BJ (cell line): ENCODE measurements at regions of chr2 and their contacts with region 1.

Region 1: GRCh38 chr2:62631160-62632085 is 74.1 kb upstream of the EHBP1 start:
- DNase-seq: no peak
- H3K4me3 ChIP-seq: no peak overlapping the region
- H3K27me3 ChIP-seq: no peaks in the 10 kb centered on the region; the same call in 1 of the 2 replicates
- CTCF ChIP-seq: no peak

Region 2: GRCh38 chr2:62641410-62641843 is 10.0 kb after region 1 on chr2:
- CTCF ChIA-PET with region 1: no interaction called
- POLR2A ChIA-PET with region 1: interaction called, 11 read pairs
- DNase-seq: no peak
- H3K4me3 ChIP-seq: no peak overlapping the region
- H3K27me3 ChIP-seq: no peaks in the 10 kb centered on the region
- CTCF ChIP-seq: no peak